Activated T-helper 2 cell treated with anti-CD3 and anti-CD28 coated beads, Interferon-gamma antibody, Interleukin-2, Interleukin-4, amounts not matched to agents 10 μg/mL and 5 μg/mL and 100 μg/mL, durations not matched to agents 14 hours and 24 hours and 36 hours (primary cell): ENCODE measurements at regions of chr4 and their contacts with region 1.

Region 1: DNA sequence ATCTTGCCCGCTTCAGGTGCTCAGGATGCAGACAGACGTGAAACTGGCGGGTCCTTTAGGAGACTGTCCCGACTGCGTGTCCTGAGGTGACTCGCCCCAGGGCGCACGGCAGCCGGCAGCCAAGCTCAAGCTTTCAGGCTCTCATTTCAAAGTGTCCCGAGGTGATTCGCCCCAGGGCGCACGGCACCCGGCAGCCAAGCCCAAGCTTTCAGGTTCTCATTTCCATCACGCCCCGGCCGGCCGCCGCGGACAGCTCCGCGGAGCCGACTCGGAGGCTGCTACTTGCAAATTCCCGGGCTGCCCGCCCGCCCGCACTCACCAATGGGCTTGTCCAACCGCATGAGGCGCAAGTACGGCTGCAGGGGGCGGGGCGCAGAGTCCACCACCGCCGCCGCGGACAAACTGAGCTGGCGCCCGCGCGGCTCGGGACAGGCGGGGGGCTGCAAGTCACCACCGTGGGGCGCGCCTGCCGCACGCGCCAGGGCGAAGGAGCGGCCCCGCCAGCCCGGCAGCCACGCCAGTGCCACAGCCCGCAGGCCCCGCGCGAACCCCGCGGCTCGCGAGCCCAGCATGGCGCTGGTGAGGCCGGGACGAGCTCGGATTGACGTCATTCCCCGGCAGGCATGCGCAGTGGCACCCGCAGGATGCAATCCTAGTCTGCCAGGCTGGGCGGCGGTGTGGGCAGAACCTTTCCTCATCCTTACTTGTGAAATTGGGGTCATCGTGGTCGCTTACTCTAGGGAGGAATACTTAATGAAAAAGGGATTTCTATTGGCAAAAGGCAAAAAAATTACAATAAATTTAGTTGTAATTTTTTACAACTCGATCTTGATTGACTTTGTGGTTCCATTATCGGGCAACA is at the start of gene COQ2:
- DNase-seq: peak; percentile 91
- H3K4me3 Mint-ChIP-seq: peak within 1 kb of the TSS; percentile 90
- H3K27ac Mint-ChIP-seq: peak within 1 kb of the TSS; percentile 95
- H3K4me1 Mint-ChIP-seq: peaks cover 45% of the 10 kb centered on the region
- H3K27me3 Mint-ChIP-seq: peaks cover 2% of the 10 kb centered on the region
- total RNA-seq, gene COQ2: 19.5 and 20.6 TPM in 2 replicates

Region 2: DNA sequence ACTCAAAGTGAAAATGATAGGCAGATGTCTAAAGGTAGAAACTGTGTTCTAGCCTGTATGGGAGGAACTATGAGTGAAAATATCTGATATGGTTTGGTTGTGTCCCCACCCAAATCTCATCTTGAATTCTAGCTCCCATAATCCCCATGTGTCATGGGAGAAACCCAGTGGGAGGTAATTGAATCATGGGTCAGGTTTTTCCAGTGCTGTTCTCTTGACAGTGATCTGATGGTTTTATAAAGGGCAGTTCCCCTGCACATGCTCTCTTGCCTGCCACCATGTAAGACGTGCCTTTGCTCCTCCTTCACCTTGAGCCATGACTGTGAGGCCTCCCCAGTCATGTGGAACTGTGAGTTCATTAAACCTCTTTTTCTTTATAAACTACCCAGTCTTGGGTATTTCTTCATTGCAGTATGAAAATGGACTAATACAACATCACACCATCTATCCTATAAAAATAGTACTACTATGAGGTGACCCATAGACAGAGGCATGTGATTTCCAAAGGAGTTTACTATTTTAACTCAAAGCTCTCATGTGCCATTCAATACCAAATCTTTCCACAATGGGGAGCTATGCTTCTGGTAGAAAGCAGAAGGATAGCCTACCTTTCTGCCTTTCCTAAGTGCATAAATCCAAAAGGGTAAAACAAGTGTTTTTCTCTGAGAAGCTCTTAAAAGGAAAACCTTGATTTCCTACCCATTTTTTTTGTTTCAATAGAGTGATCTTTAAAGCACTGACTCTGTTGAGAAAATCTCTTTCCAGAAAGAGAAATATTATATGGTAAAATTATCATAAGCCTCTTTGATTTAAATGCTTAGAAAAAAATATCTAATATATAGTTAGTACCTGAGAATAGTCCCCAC is 432.3 kb before region 1 on chr4:
- intact Hi-C with region 1: loop called (anchors 1 kb)
- DNase-seq: no peak
- H3K4me3 Mint-ChIP-seq: no peak overlapping the region
- H3K27ac Mint-ChIP-seq: peak overlapping the region; percentile 68
- H3K4me1 Mint-ChIP-seq: peaks cover 7% of the 10 kb centered on the region
- H3K27me3 Mint-ChIP-seq: no peaks in the 10 kb centered on the region

Region 3: GRCh38 chr4:83034630-83035494 is 249.6 kb before region 1 on chr4 and contains the start of gene COPS4:
- intact Hi-C with region 1: loop called (anchors 1 kb)
- DNase-seq: peak; percentile 96
- H3K4me3 Mint-ChIP-seq: peak within 1 kb of the TSS; percentile 98
- H3K27ac Mint-ChIP-seq: peak within 1 kb of the TSS; percentile 100
- H3K4me1 Mint-ChIP-seq: peaks cover 18% of the 10 kb centered on the region
- H3K27me3 Mint-ChIP-seq: peaks cover 4% of the 10 kb centered on the region
- total RNA-seq, gene COPS4: 33.7 and 35.2 TPM in 2 replicates

Region 4: GRCh38 chr4:83074086-83074704 is 210.2 kb before region 1 on chr4:
- intact Hi-C with region 1: loop called (anchors 1 kb)
- DNase-seq: peak; percentile 62
- H3K4me3 Mint-ChIP-seq: no peak overlapping the region
- H3K27ac Mint-ChIP-seq: no peak overlapping the region
- H3K4me1 Mint-ChIP-seq: peaks cover 26% of the 10 kb centered on the region
- H3K27me3 Mint-ChIP-seq: no peaks in the 10 kb centered on the region

Region 5: DNA sequence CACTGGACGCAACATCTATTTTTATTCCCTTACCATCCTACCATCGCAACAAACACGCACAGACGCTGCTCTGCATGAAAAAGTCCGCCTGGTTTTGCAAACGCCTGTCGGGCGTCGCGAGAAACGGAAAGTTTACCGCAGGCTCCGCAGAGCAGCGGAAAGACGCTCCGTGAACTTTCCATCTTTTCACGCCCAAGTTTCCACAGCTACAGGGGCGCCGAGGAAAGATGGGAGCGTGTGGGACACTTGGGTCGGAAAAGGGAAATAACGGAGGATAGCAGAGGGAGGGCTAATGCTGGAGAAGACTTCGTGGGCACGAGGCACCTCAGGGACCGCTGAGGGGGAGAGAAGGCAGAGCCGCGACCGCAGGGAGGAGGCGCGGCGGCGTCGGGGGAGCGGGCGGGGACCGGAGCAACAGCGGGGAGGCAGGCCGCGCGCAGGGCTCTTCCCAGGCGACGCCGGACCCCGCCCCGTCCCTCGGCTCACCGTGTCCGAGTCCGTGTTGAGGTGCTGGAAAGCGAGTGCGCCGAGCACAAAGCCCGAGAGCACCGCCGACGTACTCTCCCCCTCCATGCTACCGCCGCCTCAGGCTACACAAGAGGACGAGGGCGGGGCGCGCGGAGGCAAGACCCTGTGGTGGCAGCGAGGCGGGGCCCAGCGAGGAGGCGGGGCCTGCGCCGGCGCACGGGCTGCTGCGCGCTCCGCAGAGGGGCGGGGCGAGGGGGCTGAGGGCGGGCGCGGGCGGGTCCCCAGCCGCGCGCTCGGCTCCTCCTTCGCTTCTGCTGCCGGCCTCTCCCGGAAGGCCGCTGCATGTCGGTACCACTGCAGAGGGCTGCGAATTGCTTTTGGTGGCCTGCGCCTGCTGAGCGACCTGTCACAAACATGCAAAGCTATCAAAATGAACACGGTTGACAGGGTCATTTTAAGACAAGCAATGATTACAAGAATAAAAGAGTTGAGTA is 200.4 kb after region 1 on chr4 and contains the start of gene ABRAXAS1:
- intact Hi-C with region 1: loop called (anchors 10 kb)
- DNase-seq: peak; percentile 93
- H3K4me3 Mint-ChIP-seq: peak within 1 kb of the TSS; percentile 95
- H3K27ac Mint-ChIP-seq: peak within 1 kb of the TSS; percentile 96
- H3K4me1 Mint-ChIP-seq: peaks cover 14% of the 10 kb centered on the region
- H3K27me3 Mint-ChIP-seq: no peaks in the 10 kb centered on the region
- total RNA-seq, gene ABRAXAS1: 15.7 and 16.0 TPM in 2 replicates